ENCODE measurements at regions of chr10 and their contacts with region 1.

Region 1: DNA sequence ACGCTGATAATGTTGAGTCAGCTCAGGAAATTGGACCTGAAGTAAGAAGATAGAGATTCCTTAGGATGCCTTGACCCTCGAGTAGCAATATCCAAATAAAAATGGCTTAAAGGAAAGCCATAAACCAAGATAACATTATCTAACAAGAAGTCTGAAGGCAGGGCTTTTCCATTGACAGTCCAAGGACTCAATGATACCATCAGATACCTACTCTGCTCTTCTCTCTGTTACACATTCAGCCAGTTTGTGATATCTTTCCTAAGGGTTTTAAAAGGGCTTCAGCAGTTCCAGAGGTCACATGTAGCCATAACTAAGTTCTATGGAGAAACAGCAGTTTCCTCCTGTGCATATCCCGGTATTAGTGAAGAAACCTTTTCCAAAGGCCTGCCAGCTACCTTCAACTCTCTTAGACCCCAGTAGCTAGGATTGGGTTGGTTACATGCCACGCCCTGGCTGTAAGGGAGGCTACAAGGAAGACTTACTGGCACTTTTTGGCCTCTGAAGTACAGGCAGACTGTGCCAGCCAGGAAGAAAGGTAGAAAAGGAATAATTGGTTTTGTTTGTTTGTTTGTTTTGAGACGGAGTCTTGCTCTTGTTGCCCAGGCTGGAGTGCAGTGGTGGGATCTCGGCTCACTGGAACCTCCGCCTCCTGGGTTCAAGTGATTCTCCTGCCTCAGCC is 10.6 kb downstream of the SHLD2 start:
- DNase-seq: no peak
- ATAC-seq: no peak
- H3K4me3 ChIP-seq: no peak overlapping the region
- H3K27ac ChIP-seq: no peak overlapping the region
- H3K4me1 ChIP-seq: no peaks in the 10 kb centered on the region
- H3K27me3 ChIP-seq: no peaks in the 10 kb centered on the region
- CTCF ChIP-seq: no peak
- EP300 ChIP-seq: no peak
- POLR2A ChIP-seq: no peak
- RAD21 ChIP-seq: no peak

Region 2: GRCh38 chr10:86782701-86783418 is 322.7 kb before region 1 on chr10:
- CTCF ChIA-PET with region 1: no interaction called
- POLR2A ChIA-PET with region 1: no interaction called
- in situ Hi-C with region 1: no loop called
- intact Hi-C with region 1: no loop called
- DNase-seq: no peak
- ATAC-seq: no peak
- H3K4me3 ChIP-seq: no peak overlapping the region
- H3K27ac ChIP-seq: no peak overlapping the region
- H3K4me1 ChIP-seq: no peaks in the 10 kb centered on the region
- H3K27me3 ChIP-seq: no peaks in the 10 kb centered on the region
- CTCF ChIP-seq: no peak
- EP300 ChIP-seq: no peak
- POLR2A ChIP-seq: no peak
- RAD21 ChIP-seq: no peak

Region 3: DNA sequence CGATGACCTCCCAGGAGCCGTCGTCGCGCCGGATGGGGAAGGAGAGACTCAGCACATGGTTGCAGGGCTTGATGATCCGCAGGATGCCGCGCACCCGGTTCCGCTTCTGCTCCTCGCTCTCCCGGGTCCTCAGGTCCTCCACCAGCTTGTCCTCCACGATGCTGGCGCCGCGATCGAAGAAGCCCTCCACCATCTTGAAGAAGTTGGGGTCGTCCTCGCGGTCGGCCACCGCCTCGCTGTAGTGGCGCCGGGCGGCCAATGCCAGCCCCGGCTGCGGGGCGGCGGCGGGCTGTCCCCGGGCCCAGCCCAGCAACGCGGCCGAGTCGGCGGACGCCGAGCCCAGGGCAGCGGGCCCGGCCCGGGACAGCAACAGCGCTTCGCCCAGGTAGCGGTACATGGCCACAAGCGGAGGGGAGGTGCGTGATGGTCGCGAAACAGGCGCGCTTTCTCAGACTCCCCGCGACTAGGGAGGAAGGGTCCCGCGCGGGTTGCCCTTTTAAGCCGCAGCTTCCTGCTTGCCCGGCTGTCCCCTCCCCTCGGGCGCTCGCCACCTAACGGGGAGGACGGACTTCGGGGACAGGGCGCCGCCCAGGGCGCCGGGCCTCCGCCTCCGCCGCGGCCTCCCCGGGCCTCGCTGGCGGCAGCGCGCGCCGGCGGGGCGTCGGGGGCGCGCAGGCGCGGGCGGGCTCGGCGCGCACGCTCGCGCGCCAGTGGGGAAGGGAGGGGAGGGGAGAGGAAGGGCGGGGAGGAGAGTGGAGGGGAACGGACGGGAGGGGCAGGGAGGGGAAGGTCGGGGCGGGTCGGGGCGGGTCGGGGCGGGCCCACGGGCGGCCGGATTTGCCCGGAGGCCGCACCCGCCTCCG is 11.0 kb before region 1 on chr10 and contains the starts of genes GLUD1 and SHLD2:
- CTCF ChIA-PET with region 1: no interaction called
- POLR2A ChIA-PET with region 1: interaction called, 13 read pairs
- in situ Hi-C with region 1: no loop called
- intact Hi-C with region 1: no loop called
- DNase-seq: peak; percentile 80 to 91 (median 86)
- ATAC-seq: peak; percentile 79
- H3K4me3 ChIP-seq: peak within 1 kb of the TSS; percentile 68
- H3K27ac ChIP-seq: peak within 1 kb of the TSS; percentile 95
- H3K4me1 ChIP-seq: peaks cover 6 to 14% of the 10 kb centered on the region in 2 experiments
- H3K27me3 ChIP-seq: no peaks in the 10 kb centered on the region
- CTCF ChIP-seq: no peak
- EP300 ChIP-seq: no peak
- POLR2A ChIP-seq: peak; percentile 63; the same call in 1 of the 2 replicates
- RAD21 ChIP-seq: no peak
- polyA plus RNA-seq, gene GLUD1: 21.9 to 24.2 TPM
- polyA plus RNA-seq, gene SHLD2: 21.6 to 51.1 TPM